Psoas muscle (tissue), 8 donors: ENCODE measurements at regions of chr21 and their contacts with region 1.

Region 1: DNA sequence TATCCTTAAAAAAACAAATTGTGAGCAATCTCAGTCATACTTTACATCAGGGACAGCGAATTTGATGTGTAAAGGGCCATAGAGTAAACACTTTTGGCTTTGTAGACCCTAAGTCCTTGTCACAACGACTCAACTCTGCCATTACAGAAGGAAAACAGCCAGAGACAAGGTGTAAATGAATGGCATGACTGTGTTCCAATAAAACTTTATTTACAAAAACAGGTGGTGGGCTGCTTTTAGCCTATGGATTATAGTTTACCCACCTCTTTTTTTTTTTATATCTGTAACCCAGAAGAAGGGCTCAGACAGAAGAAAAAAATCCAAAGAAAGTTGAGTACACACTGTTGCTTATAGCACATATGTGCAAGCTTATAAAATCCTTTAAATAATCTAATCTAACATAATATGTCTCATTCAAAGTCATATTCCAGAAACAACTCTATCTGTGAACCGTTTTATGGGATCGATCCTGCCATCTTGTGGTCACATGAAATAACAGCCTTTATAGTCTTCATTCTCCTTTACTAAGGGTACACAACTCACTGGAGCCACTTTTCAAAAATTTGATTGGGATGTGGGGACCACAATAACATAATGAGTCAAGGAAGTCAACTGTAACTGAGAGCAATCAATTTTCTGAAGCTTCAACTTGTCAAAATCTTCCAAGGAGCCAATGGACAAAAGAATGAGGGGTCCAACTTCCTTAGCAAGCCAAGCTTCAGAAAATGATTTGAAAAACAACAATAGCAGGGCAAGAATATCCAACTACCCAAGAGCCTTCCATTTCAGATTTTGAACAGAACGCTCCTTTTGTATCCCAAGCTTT is 142.2 kb upstream of the KRTAP19-8 start:
- DNase-seq: no peak
- ATAC-seq: no peak
- H3K4me3 ChIP-seq: no peak overlapping the region
- H3K27ac ChIP-seq: no peak overlapping the region
- H3K4me1 ChIP-seq: no peaks in the 10 kb centered on the region
- H3K27me3 ChIP-seq: no peaks in the 10 kb centered on the region
- CTCF ChIP-seq: peak; percentile 24

Region 2: GRCh38 chr21:30138483-30138882 is 1042.0 kb before region 1 on chr21:
- intact Hi-C with region 1: no loop called
- DNase-seq: no peak
- ATAC-seq: no peak
- H3K4me3 ChIP-seq: no peak overlapping the region
- H3K27ac ChIP-seq: no peak overlapping the region
- H3K4me1 ChIP-seq: no peaks in the 10 kb centered on the region
- H3K27me3 ChIP-seq: no peaks in the 10 kb centered on the region
- CTCF ChIP-seq: no peak

Region 3: DNA sequence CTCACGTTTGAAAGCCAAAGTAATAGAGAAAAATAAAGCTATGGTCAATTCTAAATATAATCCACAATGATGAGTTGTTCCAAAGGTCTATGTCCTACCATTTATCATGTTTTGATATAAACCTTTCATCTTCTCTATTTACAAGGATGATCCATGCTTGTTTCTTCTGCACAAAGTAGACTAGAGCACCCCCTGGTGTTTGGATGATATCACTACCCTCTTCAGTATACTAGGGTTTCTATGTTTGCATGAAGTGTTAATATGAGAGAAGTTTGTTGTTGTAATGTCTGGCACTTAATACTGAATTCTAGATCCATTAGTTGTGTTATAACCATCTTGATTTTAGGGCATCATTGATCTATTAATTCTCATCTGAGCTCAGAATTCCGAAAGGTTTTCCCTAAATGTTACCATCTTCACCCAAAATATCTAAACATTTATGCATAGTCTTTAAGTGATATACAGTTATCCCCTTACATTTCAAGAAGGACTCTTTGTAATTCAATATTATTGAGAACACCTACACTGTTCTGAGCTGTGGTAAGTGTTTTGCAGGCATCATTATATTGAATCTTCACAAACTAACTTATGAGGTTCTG is 985.7 kb before region 1 on chr21:
- intact Hi-C with region 1: loop called in 1 of 2 experiments (anchors 5 kb)
- DNase-seq: no peak
- ATAC-seq: no peak
- H3K4me3 ChIP-seq: no peak overlapping the region
- H3K27ac ChIP-seq: no peak overlapping the region
- H3K4me1 ChIP-seq: no peaks in the 10 kb centered on the region
- H3K27me3 ChIP-seq: no peaks in the 10 kb centered on the region
- CTCF ChIP-seq: peak; percentile 7